Activated B cell treated with CpG ODN at 0.5 μM for 24 hours (primary cell): ENCODE measurements at regions of chr5 and their contacts with region 1.

Region 1: GRCh38 chr5:160439205-160439600 is 17.5 kb downstream of the PTTG1 start:
- DNase-seq: peak; percentile 86
- ATAC-seq: peak; percentile 77
- H3K4me3 Mint-ChIP-seq: peak overlapping the region; percentile 87
- H3K27ac Mint-ChIP-seq: peak overlapping the region; percentile 94
- H3K4me1 Mint-ChIP-seq: peaks cover 60% of the 10 kb centered on the region
- H3K27me3 Mint-ChIP-seq: no peaks in the 10 kb centered on the region
- CTCF ChIP-seq: peak; percentile 81

Region 2: DNA sequence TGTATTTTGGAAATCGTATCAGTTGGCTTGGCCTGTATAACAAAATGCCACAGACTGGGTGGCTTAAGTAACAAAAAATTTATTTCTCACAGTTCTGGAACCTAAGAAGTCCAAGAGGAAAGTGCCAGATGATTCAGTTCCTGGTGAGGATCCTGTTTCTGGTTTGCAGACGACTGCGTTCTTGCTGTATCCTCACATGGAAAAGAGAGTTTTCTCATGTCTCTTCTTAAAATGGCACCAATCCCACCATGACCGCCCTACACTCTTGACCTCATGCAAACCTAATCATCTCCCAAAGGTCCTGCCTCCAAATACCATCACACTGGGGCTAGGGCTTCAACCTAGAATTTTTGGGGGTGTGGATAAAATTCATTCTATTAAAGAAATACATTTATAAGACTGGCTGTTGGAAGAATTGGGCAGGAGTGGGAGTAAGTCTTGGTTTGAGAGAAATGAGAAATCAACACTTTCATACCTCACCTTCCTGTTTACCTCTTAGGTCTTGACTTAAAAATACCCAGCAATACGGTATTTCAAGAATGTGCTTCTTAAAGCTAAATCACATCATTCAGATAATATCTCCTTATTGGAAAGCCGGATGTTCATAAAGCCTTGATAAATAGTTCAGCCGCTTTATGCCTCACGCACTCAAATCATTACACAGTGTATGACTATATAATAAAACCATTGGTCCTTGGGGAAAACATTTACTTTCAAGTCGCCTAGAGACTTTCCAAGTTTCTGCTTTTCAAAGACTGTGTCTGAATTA is 11.1 kb after region 1 on chr5:
- CTCF ChIA-PET with region 1: interaction called, 9 read pairs
- POLR2A ChIA-PET with region 1: interaction called, 6 read pairs
- intact Hi-C with region 1: loop called (anchors 1 kb)
- DNase-seq: no peak
- ATAC-seq: peak; percentile 54
- H3K4me3 Mint-ChIP-seq: no peak overlapping the region
- H3K27ac Mint-ChIP-seq: no peak overlapping the region
- H3K4me1 Mint-ChIP-seq: peaks cover 29% of the 10 kb centered on the region
- H3K27me3 Mint-ChIP-seq: peaks cover 3% of the 10 kb centered on the region
- CTCF ChIP-seq: no peak

Region 3: GRCh38 chr5:160479926-160480325 is 40.7 kb after region 1 on chr5:
- CTCF ChIA-PET with region 1: interaction called, 21 read pairs
- POLR2A ChIA-PET with region 1: interaction called, 13 read pairs
- intact Hi-C with region 1: no loop called
- DNase-seq: no peak
- ATAC-seq: no peak
- H3K4me3 Mint-ChIP-seq: no peak overlapping the region
- H3K27ac Mint-ChIP-seq: no peak overlapping the region
- H3K4me1 Mint-ChIP-seq: peaks cover 52% of the 10 kb centered on the region
- H3K27me3 Mint-ChIP-seq: no peaks in the 10 kb centered on the region
- CTCF ChIP-seq: no peak

Region 4: DNA sequence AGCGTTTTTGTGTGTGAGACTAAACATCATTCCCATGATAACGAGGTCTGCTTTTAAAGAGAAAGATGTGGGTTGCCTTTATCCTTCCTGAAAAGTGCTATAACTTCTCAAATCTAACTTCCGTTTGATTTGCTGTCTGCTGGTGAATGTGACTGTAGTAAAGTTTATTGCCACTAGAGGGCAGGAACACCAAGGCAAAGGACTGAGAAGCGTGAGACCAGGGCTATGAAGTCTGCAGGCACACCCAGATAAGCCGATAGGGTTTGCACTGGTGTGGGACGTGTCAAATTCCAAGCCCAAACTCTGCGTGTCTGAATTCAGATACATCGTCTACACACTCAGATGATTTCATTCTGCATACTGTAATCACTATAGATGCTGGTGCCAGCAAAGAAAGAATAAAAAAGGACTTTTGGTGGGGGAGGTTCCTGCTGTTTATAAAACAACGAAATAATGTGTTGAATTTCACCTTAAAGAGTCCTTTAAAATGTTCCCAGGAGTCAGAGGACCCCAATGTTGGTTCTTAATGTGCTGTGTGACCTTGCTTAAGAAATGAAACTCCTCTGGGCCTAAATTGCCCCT is 69.7 kb after region 1 on chr5:
- CTCF ChIA-PET with region 1: interaction called, 128 read pairs
- POLR2A ChIA-PET with region 1: interaction called, 12 read pairs
- intact Hi-C with region 1: loop called (anchors 1 kb)
- DNase-seq: no peak
- ATAC-seq: peak; percentile 86
- H3K4me3 Mint-ChIP-seq: no peak overlapping the region
- H3K27ac Mint-ChIP-seq: no peak overlapping the region
- H3K4me1 Mint-ChIP-seq: peaks cover 26% of the 10 kb centered on the region
- H3K27me3 Mint-ChIP-seq: peaks cover 6% of the 10 kb centered on the region
- CTCF ChIP-seq: peak; percentile 33

Region 5: GRCh38 chr5:160843240-160843639 is 404.0 kb after region 1 on chr5:
- CTCF ChIA-PET with region 1: interaction called, 5 read pairs
- POLR2A ChIA-PET with region 1: interaction called, 3 read pairs
- intact Hi-C with region 1: loop called (anchors 2 kb)
- DNase-seq: no peak
- ATAC-seq: peak; percentile 80
- H3K4me3 Mint-ChIP-seq: peak overlapping the region; percentile 61
- H3K27ac Mint-ChIP-seq: peak overlapping the region; percentile 46
- H3K4me1 Mint-ChIP-seq: peaks cover 15% of the 10 kb centered on the region
- H3K27me3 Mint-ChIP-seq: no peaks in the 10 kb centered on the region
- CTCF ChIP-seq: no peak